ENCODE measurements at regions of chr2 and their contacts with region 1.

Region 1: GRCh38 chr2:37925063-37925897 is at the start of gene RMDN2:
- H3K4me3 Mint-ChIP-seq: peak within 1 kb of the TSS; percentile 97
- H3K27ac Mint-ChIP-seq: peak within 1 kb of the TSS; percentile 99
- H3K4me1 Mint-ChIP-seq: peaks cover 39% of the 10 kb centered on the region
- H3K27me3 Mint-ChIP-seq: no peaks in the 10 kb centered on the region

Region 2: GRCh38 chr2:37890893-37891495 is 34.3 kb before region 1 on chr2:
- intact Hi-C with region 1: loop called (anchors 2 kb)
- H3K4me3 Mint-ChIP-seq: no peak overlapping the region
- H3K27ac Mint-ChIP-seq: peak overlapping the region; percentile 89
- H3K4me1 Mint-ChIP-seq: peaks cover 62% of the 10 kb centered on the region
- H3K27me3 Mint-ChIP-seq: peaks cover 3% of the 10 kb centered on the region

Region 3: GRCh38 chr2:38245114-38245641 is 319.9 kb after region 1 on chr2:
- intact Hi-C with region 1: no loop called
- H3K4me3 Mint-ChIP-seq: no peak overlapping the region
- H3K27ac Mint-ChIP-seq: no peak overlapping the region
- H3K4me1 Mint-ChIP-seq: peaks cover 7% of the 10 kb centered on the region
- H3K27me3 Mint-ChIP-seq: peaks cover 5% of the 10 kb centered on the region

Measured in dendritic cell treated with granulocyte-macrophage colony-stimulating factor and Interleukin-4, amounts not matched to agents 40 ng/mL and 50 ng/mL, for 4 days (primary cell).